Activated CD4-positive, alpha-beta T cell treated with anti-CD3 and anti-CD28 coated beads for 36 hours (primary cell): ENCODE measurements at regions of chr18 and their contacts with region 1.

Region 1: GRCh38 chr18:70058916-70059315 is 111.2 kb upstream of the CD226 start:
- DNase-seq: no peak
- ATAC-seq: no peak
- H3K4me3 Mint-ChIP-seq: no peak overlapping the region
- H3K27ac Mint-ChIP-seq: no peak overlapping the region
- H3K4me1 Mint-ChIP-seq: no peaks in the 10 kb centered on the region
- H3K27me3 Mint-ChIP-seq: no peaks in the 10 kb centered on the region

Region 2: DNA sequence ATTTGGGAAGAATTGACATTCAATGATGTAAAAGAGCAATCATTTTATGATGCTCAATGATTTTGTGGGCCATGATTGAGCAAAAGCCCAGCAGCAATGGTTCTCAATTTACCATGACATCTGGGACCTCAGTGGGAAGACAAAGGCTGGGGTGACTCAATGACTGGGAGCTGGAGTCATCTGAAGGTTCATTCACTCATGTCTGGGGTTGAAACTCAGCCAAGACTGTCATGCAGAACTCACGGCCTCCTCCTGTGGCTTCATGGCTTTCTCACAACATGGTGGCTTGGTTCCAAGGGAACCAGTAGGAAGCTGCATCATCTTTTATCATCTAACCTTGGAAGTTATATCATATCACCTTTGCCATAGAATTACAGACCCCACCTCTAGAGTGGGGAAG is 66.1 kb before region 1 on chr18:
- CTCF ChIA-PET with region 1: interaction called, 4 read pairs
- POLR2A ChIA-PET with region 1: no interaction called
- intact Hi-C with region 1: loop called in 1 of 2 experiments (anchors 10 kb)
- DNase-seq: no peak
- ATAC-seq: no peak
- H3K4me3 Mint-ChIP-seq: no peak overlapping the region
- H3K27ac Mint-ChIP-seq: no peak overlapping the region
- H3K4me1 Mint-ChIP-seq: peaks cover 11% of the 10 kb centered on the region
- H3K27me3 Mint-ChIP-seq: no peaks in the 10 kb centered on the region